IMR-90 (cell line): ENCODE measurements at regions of chr11 and their contacts with region 1.

Region 1: GRCh38 chr11:9137293-9138132 is 46.1 kb upstream of the SCUBE2 start:
- DNase-seq: peak; percentile 69
- ATAC-seq: peak; percentile 96
- H3K4me3 ChIP-seq: no peak overlapping the region
- H3K27ac ChIP-seq: no peak overlapping the region
- H3K4me1 ChIP-seq: peaks cover 8% of the 10 kb centered on the region
- H3K27me3 ChIP-seq: no peaks in the 10 kb centered on the region
- CTCF ChIP-seq: peak; percentile 92
- POLR2A ChIP-seq: peak; percentile 25; the same call in 1 of the 2 replicates
- RAD21 ChIP-seq: peak; percentile 92

Region 2: DNA sequence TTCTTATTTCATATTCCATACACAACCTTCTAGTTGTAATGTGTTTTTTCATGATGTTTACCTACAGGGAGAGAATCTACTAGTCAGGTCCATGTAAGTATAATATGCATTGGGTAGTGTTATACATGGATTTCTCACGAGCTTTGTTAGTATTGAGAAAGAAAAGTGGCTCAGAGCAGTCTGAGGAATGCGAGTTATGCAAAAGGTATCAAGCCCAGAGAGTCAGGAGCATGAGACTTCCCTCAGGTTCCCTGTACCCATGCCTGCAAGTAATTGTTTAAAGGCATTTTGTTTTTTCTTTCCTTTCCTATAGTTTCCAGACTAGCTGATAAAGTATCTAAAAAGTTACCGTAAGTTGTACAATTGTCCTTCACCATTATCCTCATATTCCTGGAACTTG is 609.6 kb before region 1 on chr11:
- CTCF ChIA-PET with region 1: no interaction called
- POLR2A ChIA-PET with region 1: no interaction called
- dilution Hi-C with region 1: no loop called
- in situ Hi-C with region 1: no loop called
- intact Hi-C with region 1: no loop called
- DNase-seq: no peak
- ATAC-seq: no peak
- H3K4me3 ChIP-seq: no peak overlapping the region
- H3K27ac ChIP-seq: no peak overlapping the region
- H3K4me1 ChIP-seq: no peaks in the 10 kb centered on the region
- H3K27me3 ChIP-seq: no peaks in the 10 kb centered on the region
- CTCF ChIP-seq: no peak
- POLR2A ChIP-seq: no peak
- RAD21 ChIP-seq: no peak

Region 3: DNA sequence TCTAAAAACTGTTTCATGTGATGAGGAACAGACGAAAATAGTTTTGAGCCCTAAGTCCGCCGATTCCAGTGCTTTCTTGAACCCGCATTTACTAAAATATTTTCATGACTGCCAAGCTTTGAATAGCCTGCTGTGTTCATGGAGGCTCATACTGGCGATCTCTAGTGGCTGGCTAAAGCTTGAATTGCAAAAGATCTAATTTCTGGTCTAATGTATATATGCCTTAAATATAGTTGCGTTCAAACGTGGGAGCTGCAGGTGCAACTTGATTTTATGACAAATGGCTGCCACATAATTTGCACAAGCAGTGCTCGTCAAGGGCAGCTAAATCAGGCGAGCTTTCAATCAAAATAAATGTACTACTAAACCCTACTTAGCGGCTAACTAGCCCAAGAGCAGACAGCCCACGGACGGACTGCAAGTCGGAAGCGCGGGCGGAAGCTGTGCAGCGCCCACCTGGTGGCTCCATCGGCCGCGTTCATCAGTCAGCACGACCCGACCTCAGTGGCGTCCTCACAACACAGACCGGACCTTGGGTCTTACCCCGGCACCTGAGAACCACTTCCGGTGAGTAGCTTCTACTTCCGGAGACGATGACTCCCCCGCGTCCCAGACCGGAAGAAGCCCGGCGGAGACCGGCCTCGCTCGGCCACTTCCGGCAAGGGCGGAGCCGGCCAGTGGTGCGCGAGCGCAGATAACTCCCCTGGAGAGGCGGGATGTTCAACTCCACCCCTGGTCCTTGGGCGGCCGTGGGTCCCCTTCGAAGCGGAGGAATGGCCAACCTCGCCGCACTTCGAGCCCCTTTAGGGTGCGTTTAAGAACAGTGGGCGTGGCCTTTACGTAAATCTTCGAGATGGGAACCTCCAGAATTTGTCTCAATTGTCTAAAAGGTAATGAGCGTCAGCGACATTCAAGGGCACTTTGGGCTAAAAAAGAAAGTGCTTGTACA is 448.8 kb before region 1 on chr11:
- CTCF ChIA-PET with region 1: no interaction called
- POLR2A ChIA-PET with region 1: no interaction called
- dilution Hi-C with region 1: no loop called
- in situ Hi-C with region 1: loop called (anchors 25 kb)
- intact Hi-C with region 1: loop called (anchors 10 kb)
- DNase-seq: peak; percentile 96
- ATAC-seq: peak; percentile 89
- H3K4me3 ChIP-seq: peak overlapping the region; percentile 52
- H3K27ac ChIP-seq: peak overlapping the region; percentile 77
- H3K4me1 ChIP-seq: peaks cover 7% of the 10 kb centered on the region
- H3K27me3 ChIP-seq: no peaks in the 10 kb centered on the region
- CTCF ChIP-seq: peak; percentile 20; the same call in 1 of the 2 replicates
- POLR2A ChIP-seq: peak; percentile 80
- RAD21 ChIP-seq: peak; percentile 40

Region 4: GRCh38 chr11:8832571-8833260 is 304.8 kb before region 1 on chr11:
- CTCF ChIA-PET with region 1: no interaction called
- POLR2A ChIA-PET with region 1: no interaction called
- dilution Hi-C with region 1: no loop called
- in situ Hi-C with region 1: no loop called
- intact Hi-C with region 1: loop called (anchors 5 kb)
- DNase-seq: peak; percentile 83
- ATAC-seq: peak; percentile 89
- H3K4me3 ChIP-seq: no peak overlapping the region
- H3K27ac ChIP-seq: peak overlapping the region; percentile 90
- H3K4me1 ChIP-seq: peaks cover 33% of the 10 kb centered on the region
- H3K27me3 ChIP-seq: no peaks in the 10 kb centered on the region
- CTCF ChIP-seq: no peak
- POLR2A ChIP-seq: no peak
- RAD21 ChIP-seq: no peak

Region 5: GRCh38 chr11:8917157-8917825 is 220.2 kb before region 1 on chr11:
- CTCF ChIA-PET with region 1: interaction called, 4 read pairs
- POLR2A ChIA-PET with region 1: no interaction called
- dilution Hi-C with region 1: no loop called
- in situ Hi-C with region 1: loop called (anchors 5 kb)
- intact Hi-C with region 1: loop called (anchors 1 kb)
- DNase-seq: peak; percentile 93
- ATAC-seq: peak; percentile 90
- H3K4me3 ChIP-seq: no peak overlapping the region
- H3K27ac ChIP-seq: peak overlapping the region; percentile 93
- H3K4me1 ChIP-seq: peaks cover 20% of the 10 kb centered on the region
- H3K27me3 ChIP-seq: no peaks in the 10 kb centered on the region
- CTCF ChIP-seq: peak; percentile 18; the same call in 1 of the 2 replicates
- POLR2A ChIP-seq: no peak
- RAD21 ChIP-seq: no peak

Region 6: GRCh38 chr11:9092853-9093778 is 44.4 kb before region 1 on chr11:
- CTCF ChIA-PET with region 1: interaction called, 10 read pairs
- POLR2A ChIA-PET with region 1: no interaction called
- dilution Hi-C with region 1: no loop called
- in situ Hi-C with region 1: no loop called
- intact Hi-C with region 1: no loop called
- DNase-seq: no peak
- ATAC-seq: no peak
- H3K4me3 ChIP-seq: no peak overlapping the region
- H3K27ac ChIP-seq: no peak overlapping the region
- H3K4me1 ChIP-seq: 0 out of 2 replicates have a peak, but pooled peaks cover 2% of the 10 kb centered on the region
- H3K27me3 ChIP-seq: peaks cover 20% of the 10 kb centered on the region; the same call in 1 of the 2 replicates
- CTCF ChIP-seq: peak; percentile 31
- POLR2A ChIP-seq: no peak
- RAD21 ChIP-seq: 0 out of 2 replicates have a peak, but pooled peaks have one; percentile 11